ENCODE measurements at regions of chr16 and their contacts with region 1.

Region 1: DNA sequence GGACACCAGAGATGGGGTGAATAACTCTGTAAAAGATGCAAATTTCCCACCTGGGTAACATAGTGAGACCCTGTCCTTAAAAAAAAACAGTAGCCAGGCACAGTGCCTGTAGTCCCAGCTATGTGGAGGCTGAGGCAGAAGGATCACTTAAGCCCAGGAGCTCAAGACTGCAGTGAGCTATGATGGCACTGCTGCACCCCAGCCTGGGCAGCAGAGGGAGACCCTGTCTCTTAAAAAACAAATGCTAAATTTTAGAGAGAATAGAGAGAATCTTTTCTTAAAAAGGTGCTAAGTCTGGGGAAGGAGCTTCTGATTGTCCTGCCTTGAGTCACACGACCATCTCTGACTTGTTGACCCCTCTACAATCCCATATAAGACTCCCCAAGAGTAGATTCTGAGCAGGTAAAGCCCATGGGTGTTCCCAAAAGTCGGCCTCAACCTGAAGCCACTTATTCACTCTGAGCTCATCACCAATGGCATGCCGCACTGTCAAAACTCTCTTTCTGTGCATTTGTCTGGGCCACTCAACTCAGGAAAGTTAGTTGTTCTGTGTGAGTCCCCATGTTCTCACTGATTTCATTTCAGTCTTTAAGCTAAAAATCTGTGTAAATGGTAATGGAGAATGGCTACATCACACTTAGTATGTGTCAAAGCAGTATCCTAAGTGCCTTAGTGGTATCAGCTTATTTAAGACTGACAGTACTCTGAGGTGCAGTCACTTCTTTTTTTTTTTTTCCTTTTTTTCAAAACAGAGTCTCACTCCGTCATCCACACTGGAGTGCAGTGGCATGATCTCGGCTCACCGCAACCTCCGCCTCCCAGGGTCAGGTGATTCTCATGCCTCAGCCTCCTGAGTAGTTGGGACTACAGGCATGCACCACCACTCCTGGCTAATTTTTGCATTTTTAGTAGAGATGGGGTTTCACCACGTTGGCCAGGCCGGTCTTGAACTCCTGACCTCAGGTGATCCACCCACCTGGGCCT is 41.6 kb downstream of the PRKCB start:
- DNase-seq: peak; percentile 65
- H3K4me3 Mint-ChIP-seq: no peak overlapping the region
- H3K27ac Mint-ChIP-seq: peak overlapping the region; percentile 49
- H3K4me1 Mint-ChIP-seq: peaks cover 73% of the 10 kb centered on the region
- H3K27me3 Mint-ChIP-seq: no peaks in the 10 kb centered on the region

Region 2: GRCh38 chr16:23423496-23424049 is 453.8 kb before region 1 on chr16:
- CTCF ChIA-PET with region 1: no interaction called
- POLR2A ChIA-PET with region 1: no interaction called
- intact Hi-C with region 1: no loop called
- DNase-seq: no peak
- H3K4me3 Mint-ChIP-seq: no peak overlapping the region
- H3K27ac Mint-ChIP-seq: no peak overlapping the region
- H3K4me1 Mint-ChIP-seq: no peaks in the 10 kb centered on the region
- H3K27me3 Mint-ChIP-seq: no peaks in the 10 kb centered on the region

Region 3: GRCh38 chr16:23930791-23931190 is 53.4 kb after region 1 on chr16:
- CTCF ChIA-PET with region 1: no interaction called
- POLR2A ChIA-PET with region 1: no interaction called
- intact Hi-C with region 1: no loop called
- DNase-seq: no peak
- H3K4me3 Mint-ChIP-seq: no peak overlapping the region
- H3K27ac Mint-ChIP-seq: no peak overlapping the region
- H3K4me1 Mint-ChIP-seq: peaks cover 39% of the 10 kb centered on the region
- H3K27me3 Mint-ChIP-seq: no peaks in the 10 kb centered on the region

Region 4: DNA sequence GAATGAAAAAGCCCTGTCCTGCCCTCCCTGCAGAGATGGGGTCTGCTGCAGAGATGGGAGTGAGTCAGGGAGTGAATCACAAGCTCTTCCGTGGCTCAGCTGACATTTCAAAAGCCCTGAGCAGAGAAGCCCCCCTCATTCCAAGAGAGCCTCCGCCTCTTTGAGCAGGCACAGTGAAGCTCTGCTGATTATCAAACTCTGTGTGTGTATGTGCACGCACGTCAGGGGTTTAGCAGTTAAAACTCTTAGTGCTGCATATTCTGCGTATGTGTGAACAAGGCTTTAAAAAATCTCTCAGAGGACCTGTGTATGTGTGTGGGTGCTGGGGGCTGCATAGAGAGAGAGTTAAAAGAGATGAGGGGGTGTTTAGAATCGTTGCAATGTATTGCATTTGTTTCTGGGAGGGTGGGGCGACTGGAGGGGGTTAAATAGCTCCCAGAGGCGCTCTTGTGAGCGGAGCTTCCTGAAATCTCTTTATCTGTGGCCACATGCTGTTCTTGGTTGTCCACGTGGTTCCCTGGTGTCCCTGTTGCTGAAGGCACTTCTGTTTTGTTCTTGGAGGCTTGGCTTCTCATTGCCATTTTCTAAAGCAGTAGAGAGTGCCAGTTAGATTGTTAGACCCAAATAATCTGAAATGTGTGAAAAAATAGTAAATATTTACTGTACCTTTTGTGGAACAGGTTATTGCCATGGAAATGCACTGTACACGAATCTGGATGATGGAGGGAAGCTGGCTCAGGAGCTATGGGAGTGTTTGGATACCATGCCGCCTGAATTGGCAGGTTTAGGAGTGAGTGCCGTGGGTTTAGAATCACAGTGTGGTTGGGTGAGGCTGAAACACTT is 75.0 kb after region 1 on chr16:
- CTCF ChIA-PET with region 1: interaction called, 4 read pairs
- POLR2A ChIA-PET with region 1: interaction called, 5 read pairs
- intact Hi-C with region 1: loop called (anchors 5 kb)
- DNase-seq: peak; percentile 59
- H3K4me3 Mint-ChIP-seq: peak overlapping the region; percentile 22
- H3K27ac Mint-ChIP-seq: peak overlapping the region; percentile 63
- H3K4me1 Mint-ChIP-seq: peaks cover 82% of the 10 kb centered on the region
- H3K27me3 Mint-ChIP-seq: no peaks in the 10 kb centered on the region